GM13977 (cell line): ENCODE measurements at regions of chr16 and their contacts with region 1.

Region 1: GRCh38 chr16:69930117-69930776 is 20.9 kb upstream of the CLEC18A start:
- DNase-seq: peak; percentile 88
- CTCF ChIP-seq: peak; percentile 86

Region 2: DNA sequence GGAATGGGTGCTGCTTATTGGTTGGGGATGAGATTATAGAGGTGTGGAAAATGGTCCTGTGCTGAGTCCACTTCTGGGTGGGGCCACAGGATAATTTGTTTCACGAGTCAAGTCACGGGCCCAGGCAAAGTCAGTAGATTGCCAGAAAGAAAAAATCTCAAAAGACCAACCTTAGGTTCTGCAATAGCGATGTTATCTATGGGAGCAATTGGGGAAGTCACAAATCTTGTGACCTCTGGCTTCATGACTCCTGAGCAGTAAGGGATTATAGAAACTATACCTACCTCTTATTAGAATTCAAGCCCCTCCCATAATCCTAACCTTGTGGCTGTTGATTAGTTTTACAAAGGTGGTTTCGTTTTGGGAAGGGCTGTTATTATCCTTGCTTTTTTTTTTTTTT is 136.7 kb before region 1 on chr16:
- in situ Hi-C with region 1: loop called (anchors 5 kb)
- DNase-seq: no peak
- CTCF ChIP-seq: no peak